PC-3 (cell line): ENCODE measurements at regions of chr10 and their contacts with region 1.

Region 1: GRCh38 chr10:70052462-70053217 is at the start of gene MACROH2A2:
- DNase-seq: peak; percentile 85
- ATAC-seq: peak; percentile 78
- H3K4me3 ChIP-seq: peak within 1 kb of the TSS; percentile 82
- H3K27ac ChIP-seq: no peak within 1 kb of the TSS
- H3K4me1 ChIP-seq: peaks cover 32% of the 10 kb centered on the region
- H3K27me3 ChIP-seq: peaks cover 16% of the 10 kb centered on the region
- CTCF ChIP-seq: peak; percentile 82
- total RNA-seq, gene MACROH2A2: 86.7 and 103 TPM in 2 replicates

Region 2: DNA sequence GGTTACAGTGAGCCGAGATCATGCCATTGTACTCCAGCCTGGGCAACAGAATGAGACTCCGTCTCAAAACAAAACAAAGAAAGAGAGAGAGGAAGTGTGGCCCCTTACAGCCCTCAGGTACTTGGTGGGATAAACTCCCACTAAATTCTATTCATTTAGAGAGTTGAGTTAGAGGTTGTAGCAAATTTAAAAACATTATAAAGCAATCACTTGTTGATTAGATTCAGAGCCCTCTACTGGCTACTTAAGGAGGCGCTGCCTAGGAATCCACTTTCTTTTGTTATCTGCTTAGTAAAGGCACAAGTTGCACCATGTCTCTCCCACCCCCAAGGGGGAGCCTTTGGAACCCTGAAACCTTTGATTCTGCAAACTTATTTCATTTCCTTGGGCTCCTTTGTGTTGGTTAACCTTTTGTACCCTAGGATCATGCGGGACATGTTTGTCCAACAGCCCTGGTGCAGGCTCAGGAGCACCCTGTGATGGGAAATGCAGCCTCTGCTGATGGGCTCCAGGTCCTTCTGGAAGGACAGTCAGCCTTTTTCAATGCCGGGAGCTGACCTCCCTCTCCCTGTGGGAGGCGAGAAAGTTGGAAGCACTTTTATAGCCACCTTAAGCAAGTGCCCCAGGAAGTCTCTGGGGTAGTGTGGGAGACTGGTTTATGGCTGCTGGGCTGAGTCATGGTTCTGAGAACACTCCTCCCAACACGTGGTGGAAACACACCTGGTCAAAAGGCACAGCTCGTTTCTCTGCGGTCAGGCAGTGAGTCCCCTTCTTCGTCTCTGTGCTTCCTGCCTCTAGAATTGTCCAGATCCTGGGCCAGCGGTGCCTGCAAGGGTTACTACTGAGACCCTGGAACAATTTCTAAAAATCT is 830.2 kb before region 1 on chr10:
- CTCF ChIA-PET with region 1: no interaction called
- POLR2A ChIA-PET with region 1: interaction called, 14 read pairs
- intact Hi-C with region 1: no loop called
- DNase-seq: peak; percentile 98
- ATAC-seq: peak; percentile 95
- H3K4me3 ChIP-seq: peak overlapping the region; percentile 52
- H3K27ac ChIP-seq: peak overlapping the region; percentile 86
- H3K4me1 ChIP-seq: peaks cover 28% of the 10 kb centered on the region
- H3K27me3 ChIP-seq: no peaks in the 10 kb centered on the region
- CTCF ChIP-seq: peak; percentile 96

Region 3: DNA sequence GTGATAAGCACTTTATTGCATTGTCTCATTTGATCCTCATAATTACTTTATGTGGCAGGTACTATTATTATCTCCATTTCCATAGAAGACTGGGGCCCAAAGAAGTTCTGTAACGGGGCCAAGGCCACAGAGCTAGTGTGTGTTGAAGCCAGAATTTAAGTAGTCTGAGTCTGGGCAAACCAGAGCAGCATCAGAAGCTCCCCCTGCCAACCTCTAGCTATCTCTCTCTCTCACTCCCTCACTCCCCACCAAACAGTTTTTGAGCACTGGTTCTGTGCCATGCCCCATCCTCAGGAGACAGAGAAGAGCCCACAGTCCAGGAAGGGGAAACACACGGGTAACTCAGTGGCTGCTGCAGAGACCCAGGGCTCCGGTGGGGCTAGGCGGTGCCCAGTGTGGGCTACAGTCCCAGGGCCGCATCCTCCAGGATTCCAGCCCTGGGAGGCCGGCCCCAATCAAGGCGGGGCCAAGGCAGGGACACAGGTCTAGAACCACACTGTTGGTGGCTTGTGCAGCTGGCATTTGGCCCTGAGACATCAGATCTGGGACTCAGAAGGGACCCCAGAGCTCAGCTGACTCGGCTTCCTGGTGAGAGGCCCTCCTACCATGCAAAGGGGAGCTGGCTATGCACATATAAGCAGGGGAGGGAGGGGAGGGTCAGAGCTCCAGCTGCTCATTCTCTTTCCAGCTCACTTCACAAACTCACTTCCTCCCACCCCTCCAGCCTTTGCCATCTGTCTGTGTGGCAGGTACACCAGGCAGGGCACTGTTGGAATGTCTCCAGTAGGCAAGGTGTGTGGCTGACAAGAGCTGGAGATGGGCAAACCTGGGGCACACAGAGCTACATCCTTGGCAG is 216.5 kb before region 1 on chr10:
- CTCF ChIA-PET with region 1: no interaction called
- POLR2A ChIA-PET with region 1: no interaction called
- intact Hi-C with region 1: no loop called
- DNase-seq: peak; percentile 33
- ATAC-seq: no peak
- H3K4me3 ChIP-seq: no peak overlapping the region
- H3K27ac ChIP-seq: no peak overlapping the region
- H3K4me1 ChIP-seq: peaks cover 29% of the 10 kb centered on the region
- H3K27me3 ChIP-seq: no peaks in the 10 kb centered on the region
- CTCF ChIP-seq: no peak

Region 4: GRCh38 chr10:69968830-69969229 is 83.8 kb before region 1 on chr10:
- CTCF ChIA-PET with region 1: no interaction called
- POLR2A ChIA-PET with region 1: no interaction called
- intact Hi-C with region 1: loop called (anchors 5 kb)
- DNase-seq: peak; percentile 64
- ATAC-seq: peak; percentile 73
- H3K4me3 ChIP-seq: no peak overlapping the region
- H3K27ac ChIP-seq: no peak overlapping the region
- H3K4me1 ChIP-seq: no peaks in the 10 kb centered on the region; the same call in 1 of the 2 replicates
- H3K27me3 ChIP-seq: peaks cover 56% of the 10 kb centered on the region
- CTCF ChIP-seq: peak; percentile 77

Region 5: DNA sequence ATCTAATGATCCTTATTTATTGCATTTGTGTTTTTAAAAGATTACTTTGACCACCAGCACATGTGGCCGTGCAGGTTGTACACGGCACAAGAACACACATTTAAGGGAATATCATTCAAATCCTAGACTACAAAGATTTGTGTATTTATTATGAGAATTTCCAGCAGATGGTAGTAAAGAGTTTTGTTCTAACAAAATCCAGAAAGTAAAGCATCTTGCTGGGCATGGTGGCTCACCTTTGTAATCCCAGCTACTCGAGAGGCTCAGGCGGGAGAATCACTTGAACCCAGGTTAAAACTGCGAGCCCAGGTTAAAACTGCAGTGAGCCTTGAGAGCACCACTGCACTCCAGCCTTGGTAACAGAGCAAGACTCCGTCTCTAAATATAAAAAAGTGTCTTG is 31.5 kb after region 1 on chr10:
- CTCF ChIA-PET with region 1: interaction called, 31 read pairs
- POLR2A ChIA-PET with region 1: no interaction called
- intact Hi-C with region 1: no loop called
- DNase-seq: peak; percentile 50
- ATAC-seq: peak; percentile 60
- H3K4me3 ChIP-seq: no peak overlapping the region
- H3K27ac ChIP-seq: no peak overlapping the region
- H3K4me1 ChIP-seq: no peaks in the 10 kb centered on the region
- H3K27me3 ChIP-seq: no peaks in the 10 kb centered on the region
- CTCF ChIP-seq: peak; percentile 50